ENCODE measurements at regions of chr13 and their contacts with region 1.

Region 1: GRCh38 chr13:77274126-77274525 is 52.8 kb downstream of the MYCBP2 start:
- DNase-seq: no peak
- ATAC-seq: no peak
- H3K4me3 ChIP-seq: no peak overlapping the region
- H3K27ac ChIP-seq: no peak overlapping the region
- H3K4me1 ChIP-seq: no peaks in the 10 kb centered on the region
- H3K27me3 ChIP-seq: no peaks in the 10 kb centered on the region

Region 2: DNA sequence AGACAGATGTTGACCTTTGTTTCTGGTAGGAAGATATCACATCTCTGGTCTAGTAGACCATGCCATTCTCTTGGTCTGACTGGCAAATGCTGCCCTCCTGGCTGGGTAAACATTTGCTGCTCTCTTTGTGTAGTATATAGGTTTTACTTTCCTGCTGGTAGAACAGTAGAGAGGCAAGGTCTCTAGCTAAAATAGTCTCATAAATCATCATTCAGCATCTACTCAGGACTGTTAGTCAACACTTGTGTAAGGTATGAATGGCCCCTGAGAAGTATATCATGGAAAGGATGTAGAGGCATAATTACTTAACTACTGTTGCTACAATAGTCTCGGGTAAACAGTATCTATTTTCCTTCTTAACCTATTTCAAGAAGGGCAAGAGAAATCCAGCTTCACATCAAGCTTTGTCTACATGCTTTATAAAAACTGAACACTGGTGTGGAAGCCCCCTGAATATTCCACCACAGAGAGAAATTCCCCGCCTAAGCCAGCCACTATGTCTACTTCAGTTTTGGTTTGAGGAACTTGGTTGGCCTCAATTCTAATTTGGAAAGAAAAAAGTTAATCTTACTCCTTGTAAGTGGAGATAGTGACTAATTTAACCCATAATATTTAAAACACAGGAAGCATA is 71.1 kb after region 1 on chr13:
- intact Hi-C with region 1: no loop called
- DNase-seq: no peak
- ATAC-seq: no peak
- H3K4me3 ChIP-seq: no peak overlapping the region
- H3K27ac ChIP-seq: no peak overlapping the region
- H3K4me1 ChIP-seq: no peaks in the 10 kb centered on the region
- H3K27me3 ChIP-seq: no peaks in the 10 kb centered on the region

Region 3: DNA sequence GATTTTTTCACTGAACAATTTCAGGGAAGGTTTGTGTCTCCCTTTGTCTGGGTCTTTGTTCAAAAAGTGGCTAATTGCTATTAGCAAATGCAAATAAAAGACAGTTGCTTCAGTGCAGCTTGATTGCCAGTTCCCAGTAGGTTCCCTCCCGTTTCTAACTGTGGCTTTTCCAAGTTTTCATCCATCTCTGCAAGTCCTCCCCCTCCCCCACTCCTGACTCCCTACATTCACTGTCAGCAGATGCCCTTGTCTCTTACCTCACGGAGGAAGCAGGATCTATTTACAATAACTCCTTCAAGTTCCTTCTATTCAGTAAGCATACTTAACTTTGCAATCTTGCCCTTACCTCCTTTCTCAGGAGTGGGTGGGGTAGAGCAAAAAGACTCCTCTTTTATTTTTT is 205.9 kb after region 1 on chr13:
- intact Hi-C with region 1: loop called in 1 of 4 experiments (anchors 10 kb)
- DNase-seq: no peak
- ATAC-seq: no peak
- H3K4me3 ChIP-seq: no peak overlapping the region
- H3K27ac ChIP-seq: no peak overlapping the region
- H3K4me1 ChIP-seq: no peaks in the 10 kb centered on the region
- H3K27me3 ChIP-seq: no peaks in the 10 kb centered on the region